ENCODE measurements at regions of chr12 and their contacts with region 1.

Region 1: GRCh38 chr12:102300824-102301461 is 103.3 kb upstream of the PMCH start:
- DNase-seq: peak in 1 of 9 donors; percentile 24
- ATAC-seq: peak; percentile 27
- H3K4me3 ChIP-seq: no peak overlapping the region
- H3K4me3 Mint-ChIP-seq: no peak overlapping the region
- H3K27ac ChIP-seq: no peak overlapping the region
- H3K27ac Mint-ChIP-seq: no peak overlapping the region
- H3K4me1 ChIP-seq: no peaks in the 10 kb centered on the region
- H3K4me1 Mint-ChIP-seq: peaks cover 0 to 14% (median 0%) of the 10 kb centered on the region in 7 donors
- H3K27me3 ChIP-seq: no peaks in the 10 kb centered on the region
- H3K27me3 Mint-ChIP-seq: peaks cover 0 to 30% (median 4%) of the 10 kb centered on the region in 5 donors

Region 2: DNA sequence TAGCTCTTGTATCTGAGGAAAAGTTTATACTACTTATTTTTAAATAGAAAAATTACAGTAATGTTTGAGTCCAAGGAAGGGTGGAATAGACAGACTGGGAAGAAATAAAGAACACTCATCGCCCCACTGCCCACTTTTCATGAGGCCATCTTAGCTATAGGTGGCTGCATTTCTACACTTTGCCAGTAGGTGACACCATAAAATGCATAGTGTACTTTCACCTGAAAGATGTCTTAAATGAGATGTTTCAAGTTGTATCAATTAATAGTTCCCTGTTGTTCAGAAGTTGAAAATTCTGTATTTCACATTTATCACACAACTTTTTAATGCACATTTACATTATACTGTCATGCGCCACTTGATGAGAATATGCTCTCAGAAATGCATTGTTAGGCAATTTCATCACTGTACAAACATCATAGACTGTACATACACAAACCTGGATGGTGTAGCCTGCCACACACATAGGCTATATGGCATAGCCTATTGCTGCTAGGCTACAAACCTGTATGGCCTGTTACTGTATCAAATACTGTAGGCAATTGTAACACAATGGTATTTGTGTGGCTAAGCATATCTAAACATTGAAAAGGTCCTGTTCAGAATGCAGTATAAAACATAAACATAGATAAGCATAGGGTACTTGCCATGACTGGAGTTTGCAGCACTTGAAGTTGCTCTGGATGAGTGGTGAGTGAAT is 130.9 kb before region 1 on chr12:
- CTCF ChIA-PET with region 1: no interaction called
- POLR2A ChIA-PET with region 1: no interaction called
- intact Hi-C with region 1: loop called in 1 of 2 experiments (anchors 1 kb)
- DNase-seq: peak in 2 of 9 donors; percentile 2 to 5
- ATAC-seq: peak; percentile 54
- H3K4me3 ChIP-seq: no peak overlapping the region
- H3K4me3 Mint-ChIP-seq: no peak overlapping the region
- H3K27ac ChIP-seq: no peak overlapping the region
- H3K27ac Mint-ChIP-seq: no peak overlapping the region
- H3K4me1 ChIP-seq: no peaks in the 10 kb centered on the region
- H3K4me1 Mint-ChIP-seq: peaks cover 0 to 17% (median 0%) of the 10 kb centered on the region in 7 donors
- H3K27me3 ChIP-seq: no peaks in the 10 kb centered on the region
- H3K27me3 Mint-ChIP-seq: no peaks in the 10 kb centered on the region

Region 3: DNA sequence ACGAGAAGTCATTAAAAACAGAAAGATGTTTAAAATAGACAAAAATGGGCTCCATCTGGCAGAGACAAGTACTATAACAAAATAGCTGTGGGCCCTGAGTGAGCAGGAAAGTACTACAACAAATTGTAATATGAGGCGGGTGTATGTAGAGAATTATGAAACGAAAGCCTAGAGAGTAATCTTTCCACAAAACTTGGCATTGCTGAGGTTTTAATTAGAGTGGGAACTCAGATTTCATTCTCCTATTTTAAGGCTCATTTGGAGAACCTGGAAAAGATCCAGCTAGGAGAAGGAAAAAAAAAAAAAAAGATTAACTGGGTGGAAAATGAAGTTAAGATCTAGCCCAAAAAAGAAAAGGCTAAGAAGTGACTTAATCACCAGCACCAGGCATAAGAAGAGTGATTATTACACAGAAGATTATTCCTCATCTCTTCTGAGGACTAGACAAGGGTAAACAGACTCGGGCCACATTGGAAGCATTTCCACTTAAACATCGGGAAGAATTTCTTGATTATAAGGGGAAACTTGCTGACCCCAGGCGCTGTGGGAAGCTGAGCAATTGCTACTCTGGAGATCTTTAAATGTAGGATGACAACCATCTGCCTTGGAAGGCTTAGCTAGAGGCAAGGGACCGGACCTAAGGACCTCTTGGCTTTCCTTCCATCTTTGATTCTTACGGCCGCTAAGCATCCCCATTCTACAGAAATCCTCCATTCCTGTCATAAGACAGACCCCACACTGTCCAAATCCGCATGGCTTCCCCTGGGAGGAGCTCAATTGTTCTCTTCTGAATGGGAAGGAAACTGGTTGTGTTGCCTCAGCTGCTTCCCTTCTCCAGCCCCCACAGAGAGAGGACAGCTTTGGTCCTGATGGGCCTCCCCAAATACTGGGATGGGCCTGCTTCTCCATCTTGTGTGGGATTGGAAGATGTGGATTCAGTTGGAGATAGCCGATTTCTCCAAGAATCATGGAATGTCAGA is 138.8 kb after region 1 on chr12:
- CTCF ChIA-PET with region 1: no interaction called
- POLR2A ChIA-PET with region 1: no interaction called
- intact Hi-C with region 1: no loop called
- DNase-seq: no peak
- ATAC-seq: no peak
- H3K4me3 ChIP-seq: no peak overlapping the region
- H3K4me3 Mint-ChIP-seq: no peak overlapping the region
- H3K27ac ChIP-seq: no peak overlapping the region
- H3K27ac Mint-ChIP-seq: no peak overlapping the region
- H3K4me1 ChIP-seq: no peaks in the 10 kb centered on the region
- H3K4me1 Mint-ChIP-seq: peaks cover 0 to 4% (median 0%) of the 10 kb centered on the region in 7 donors
- H3K27me3 ChIP-seq: no peaks in the 10 kb centered on the region
- H3K27me3 Mint-ChIP-seq: peaks cover 0 to 12% (median 6%) of the 10 kb centered on the region in 5 donors

Region 4: DNA sequence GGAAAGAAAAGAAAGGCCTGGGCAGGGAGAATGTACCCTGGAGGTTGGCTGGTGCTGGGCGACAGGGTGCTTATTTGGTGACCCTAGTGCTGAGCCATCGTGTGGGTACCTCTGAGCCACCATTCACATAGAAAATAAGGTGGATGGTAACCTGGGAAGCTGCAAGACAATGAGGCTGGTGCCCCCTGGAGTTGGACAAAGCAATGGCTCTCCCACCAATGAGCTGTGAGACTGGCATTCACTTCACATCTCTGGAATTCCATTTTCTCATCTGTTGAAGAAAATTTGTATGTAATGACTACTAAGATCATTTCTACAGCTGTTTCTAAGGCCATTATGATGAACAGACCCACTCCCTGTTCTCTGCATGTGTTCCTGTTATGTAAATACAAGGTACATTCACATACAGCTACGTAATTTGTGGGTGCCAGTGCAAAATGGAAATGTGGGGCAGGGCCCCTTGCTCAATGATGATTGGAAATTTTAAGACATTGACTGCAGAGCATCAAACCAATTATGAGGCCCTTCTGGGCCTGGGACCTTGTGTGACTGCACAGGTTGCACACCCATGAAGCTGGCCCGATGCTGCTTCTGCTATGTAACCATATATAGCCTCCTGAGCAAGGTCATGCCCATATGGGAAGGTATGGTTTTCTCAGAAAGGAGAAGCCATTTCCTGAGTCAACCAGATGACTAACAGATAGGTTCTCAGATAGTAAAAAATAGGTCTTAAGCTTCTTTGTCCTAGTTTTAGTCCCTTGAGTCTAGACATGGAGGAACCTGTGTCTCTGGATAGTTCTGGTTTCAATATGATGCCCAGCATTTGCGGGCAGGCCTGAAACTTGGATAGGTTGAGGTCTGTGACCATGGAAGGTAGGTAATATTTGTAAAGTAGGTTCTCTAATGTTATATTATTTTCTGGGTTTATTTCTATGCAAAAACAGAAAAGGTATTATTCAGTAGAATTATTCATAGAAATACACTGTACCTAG is 242.8 kb after region 1 on chr12:
- CTCF ChIA-PET with region 1: no interaction called
- POLR2A ChIA-PET with region 1: no interaction called
- intact Hi-C with region 1: loop called in 1 of 2 experiments (anchors 5 kb)
- DNase-seq: no peak
- ATAC-seq: no peak
- H3K4me3 ChIP-seq: no peak overlapping the region
- H3K4me3 Mint-ChIP-seq: no peak overlapping the region
- H3K27ac ChIP-seq: no peak overlapping the region
- H3K27ac Mint-ChIP-seq: no peak overlapping the region
- H3K4me1 ChIP-seq: no peaks in the 10 kb centered on the region
- H3K4me1 Mint-ChIP-seq: peaks cover 0 to 6% (median 0%) of the 10 kb centered on the region in 7 donors
- H3K27me3 ChIP-seq: no peaks in the 10 kb centered on the region
- H3K27me3 Mint-ChIP-seq: peaks cover 7 to 39% (median 16%) of the 10 kb centered on the region in 5 donors

Measured in naive thymus-derived CD4-positive, alpha-beta T cell (primary cell).